Panc1 (cell line): ENCODE measurements at regions of chr3 and their contacts with region 1.

Region 1: GRCh38 chr3:12796171-12797123 is at the start of gene CAND2:
- DNase-seq: no peak
- ATAC-seq: no peak
- H3K4me3 ChIP-seq: peak within 1 kb of the TSS in 1 of 2 experiments; percentile 27; a peak in 1 of 4 replicates
- H3K27ac ChIP-seq: no peak within 1 kb of the TSS
- H3K4me1 ChIP-seq: no peaks in the 10 kb centered on the region
- H3K27me3 ChIP-seq: no peaks in the 10 kb centered on the region
- CTCF ChIP-seq: no peak
- total RNA-seq, gene CAND2: 0.13 TPM

Region 2: GRCh38 chr3:11969986-11970385 is 826.5 kb before region 1 on chr3:
- CTCF ChIA-PET with region 1: no interaction called
- POLR2A ChIA-PET with region 1: interaction called, 10 read pairs
- in situ Hi-C with region 1: no loop called
- intact Hi-C with region 1: no loop called
- DNase-seq: no peak
- ATAC-seq: no peak
- H3K4me3 ChIP-seq: no peak overlapping the region
- H3K27ac ChIP-seq: no peak overlapping the region
- H3K4me1 ChIP-seq: no peaks in the 10 kb centered on the region
- H3K27me3 ChIP-seq: no peaks in the 10 kb centered on the region
- CTCF ChIP-seq: no peak

Region 3: DNA sequence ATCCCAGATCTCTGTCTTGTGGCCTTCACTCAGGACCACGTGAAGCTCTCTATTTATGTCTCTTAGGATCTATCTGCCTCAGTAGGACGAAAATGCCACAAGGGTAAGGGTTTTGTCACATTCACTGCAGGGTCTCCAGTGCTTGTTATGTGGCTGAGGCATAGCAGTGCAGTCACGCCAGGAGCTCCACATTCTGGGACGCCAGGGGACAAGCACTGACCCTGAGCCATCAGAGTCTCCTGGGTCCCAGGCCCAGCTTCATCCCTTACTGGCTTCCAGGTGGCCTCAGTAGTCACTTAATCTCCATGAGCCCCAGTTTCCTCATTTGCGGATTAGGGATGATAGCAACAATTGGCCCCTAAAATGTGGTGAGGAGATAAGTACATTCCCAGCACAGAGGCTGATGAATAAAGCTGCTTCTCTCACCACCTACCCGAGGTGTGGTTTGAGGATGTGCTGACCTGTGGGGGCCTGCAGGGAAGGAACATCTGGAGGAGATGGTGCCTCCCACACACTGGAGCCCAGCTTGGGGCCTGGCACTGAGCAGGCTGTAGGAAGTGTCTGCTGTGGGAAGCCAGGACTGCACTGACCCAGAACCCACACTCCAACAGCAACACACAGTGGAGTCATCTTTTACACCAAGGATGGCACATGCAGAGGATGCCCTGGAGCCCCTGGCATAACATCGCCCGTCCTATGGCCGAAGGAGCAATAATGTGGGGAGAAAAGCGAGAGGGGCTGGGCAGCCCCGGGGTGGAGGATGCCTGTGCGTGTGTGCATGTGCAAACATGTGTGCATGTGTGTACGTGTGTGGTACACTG is 370.0 kb after region 1 on chr3:
- CTCF ChIA-PET with region 1: no interaction called
- POLR2A ChIA-PET with region 1: no interaction called
- in situ Hi-C with region 1: no loop called
- intact Hi-C with region 1: no loop called
- DNase-seq: no peak
- ATAC-seq: no peak
- H3K4me3 ChIP-seq: no peak overlapping the region
- H3K27ac ChIP-seq: no peak overlapping the region
- H3K4me1 ChIP-seq: no peaks in the 10 kb centered on the region
- H3K27me3 ChIP-seq: no peaks in the 10 kb centered on the region
- CTCF ChIP-seq: no peak